HCT116 (cell line): ENCODE measurements at regions of chr4 and their contacts with region 1.

Region 1: DNA sequence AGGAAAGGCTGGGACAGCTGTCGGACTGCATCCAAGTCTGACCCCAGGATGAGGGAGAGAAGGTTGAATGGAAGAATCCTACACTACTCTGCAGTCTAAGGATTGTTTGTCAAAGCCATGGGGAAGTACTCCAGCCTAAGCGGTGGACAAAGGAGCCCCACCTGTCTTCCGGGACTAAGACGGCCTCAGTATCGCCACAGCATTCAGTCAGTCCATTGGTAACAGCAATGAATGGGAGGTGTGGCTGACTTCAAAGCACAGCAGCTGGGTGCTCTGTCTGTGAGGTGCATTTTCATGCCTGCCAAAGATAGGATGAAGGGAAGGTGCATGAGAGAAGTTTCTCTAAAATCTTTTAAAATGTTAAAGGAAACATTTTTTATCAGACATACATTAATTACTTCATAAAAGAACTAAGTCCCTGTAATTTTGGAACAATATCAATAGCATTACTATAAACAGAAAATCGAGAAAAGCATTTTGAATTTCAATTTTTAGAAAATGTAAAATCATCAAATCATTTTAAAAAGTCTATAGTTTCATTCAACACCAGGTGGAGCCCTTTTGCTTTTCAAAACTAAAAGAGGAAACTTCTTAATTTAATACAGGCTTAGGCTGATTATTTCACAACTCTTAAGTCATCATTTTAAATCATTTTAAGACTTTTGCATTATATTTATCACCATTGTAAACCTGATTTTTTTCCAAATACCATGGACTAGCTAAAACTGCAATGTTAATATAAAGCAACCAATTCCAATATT is 27.6 kb upstream of the INTU start:
- DNase-seq: peak; percentile 33
- ATAC-seq: peak; percentile 94
- H3K4me3 ChIP-seq: peak overlapping the region; percentile 4 to 19; a peak in 2 of 4 replicates
- H3K27ac ChIP-seq: no peak overlapping the region
- H3K4me1 ChIP-seq: peaks cover 6 to 7% of the 10 kb centered on the region in 2 experiments; a peak in 3 of 4 replicates
- H3K27me3 ChIP-seq: no peaks in the 10 kb centered on the region
- CTCF ChIP-seq: peak in 2 of 3 experiments; percentile 62 to 80; a peak in 3 of 6 replicates
- POLR2A ChIP-seq: no peak
- RAD21 ChIP-seq: peak; percentile 82

Region 2: DNA sequence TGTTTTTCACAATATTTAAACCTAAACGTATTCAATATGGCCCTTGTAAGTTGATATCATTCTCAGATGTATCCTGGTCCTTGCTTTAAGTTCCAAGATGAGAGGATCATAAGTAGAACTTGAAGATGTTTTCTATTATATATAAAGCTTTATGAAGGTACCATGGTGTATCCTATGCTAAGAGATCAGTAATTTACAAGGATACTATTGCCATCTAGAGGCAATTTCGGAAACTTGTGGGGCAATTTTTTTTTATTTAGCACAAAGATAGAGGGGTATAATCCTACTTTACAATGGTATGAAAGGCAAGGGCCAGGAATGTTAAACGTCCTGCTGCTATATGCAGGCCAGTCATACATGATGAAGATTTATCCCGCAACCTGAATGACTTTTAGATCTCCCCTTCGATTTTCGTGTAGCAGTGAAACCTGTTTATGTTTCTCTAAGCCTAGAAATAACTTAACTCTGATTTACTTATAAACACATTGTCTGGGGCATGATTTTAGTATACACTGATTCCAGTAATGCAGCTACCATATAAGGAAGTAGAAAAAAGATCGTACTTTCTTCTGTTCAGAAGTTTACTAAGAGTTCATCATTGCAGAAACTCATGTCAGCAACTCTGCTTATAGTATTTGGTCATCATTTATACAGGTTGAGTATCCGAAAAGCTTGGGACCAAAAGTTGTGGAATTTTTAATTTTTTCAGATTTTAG is 127.6 kb after region 1 on chr4:
- CTCF ChIA-PET with region 1: interaction called, 96 read pairs
- POLR2A ChIA-PET with region 1: no interaction called
- RAD21 ChIA-PET with region 1: interaction called, 6 to 7 read pairs
- intact Hi-C with region 1: loop called (anchors 1 kb)
- DNase-seq: peak; percentile 41
- ATAC-seq: peak; percentile 96
- H3K4me3 ChIP-seq: no peak overlapping the region
- H3K27ac ChIP-seq: no peak overlapping the region
- H3K4me1 ChIP-seq: no peaks in the 10 kb centered on the region
- H3K27me3 ChIP-seq: no peaks in the 10 kb centered on the region
- CTCF ChIP-seq: peak; percentile 40 to 84 (median 76); a peak in 5 of 6 replicates
- POLR2A ChIP-seq: no peak
- RAD21 ChIP-seq: peak; percentile 86

Region 3: DNA sequence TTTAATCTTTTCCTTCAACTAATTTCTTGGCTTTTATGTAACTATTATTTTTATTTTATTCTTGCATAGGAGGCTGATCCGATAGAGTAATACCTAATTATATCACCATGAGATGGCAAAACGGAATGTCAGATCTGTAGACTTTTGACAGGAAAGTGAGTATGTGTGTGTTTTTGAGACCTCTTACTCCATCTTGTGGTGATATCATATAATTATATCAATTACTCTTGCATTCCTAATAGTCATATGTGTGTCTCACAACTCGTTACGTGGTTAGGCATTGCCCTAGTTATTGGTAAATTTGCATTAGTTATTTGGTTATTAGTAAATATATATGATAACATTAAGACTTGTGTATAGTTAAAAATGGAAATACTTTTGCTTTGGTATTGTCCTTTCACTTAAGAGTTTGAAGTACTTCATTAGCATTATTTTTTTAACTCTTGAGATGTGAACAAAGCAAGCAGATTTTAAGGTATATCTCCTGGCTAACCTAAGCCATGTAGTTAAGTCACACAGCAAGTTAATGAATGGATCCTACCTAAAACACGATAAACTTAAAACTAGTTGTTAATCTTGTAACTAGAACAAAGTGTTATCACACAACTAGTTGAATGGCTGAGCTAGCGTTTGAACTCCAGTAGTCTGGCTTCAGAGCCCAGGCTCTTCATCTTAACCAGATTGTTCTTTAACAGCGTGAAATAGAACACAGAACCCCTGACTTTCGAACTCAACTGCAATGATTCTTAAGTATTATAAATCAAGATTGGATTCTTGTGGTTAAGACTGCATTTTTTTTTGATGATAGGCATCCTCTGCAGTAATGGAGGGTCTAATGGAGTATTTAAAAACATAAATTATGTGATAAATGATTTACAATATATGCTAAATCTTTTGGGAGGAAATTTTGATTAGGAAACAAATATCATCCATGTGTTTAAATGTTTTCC is 615.4 kb after region 1 on chr4:
- CTCF ChIA-PET with region 1: no interaction called
- POLR2A ChIA-PET with region 1: no interaction called
- RAD21 ChIA-PET with region 1: no interaction called
- intact Hi-C with region 1: loop called (anchors 10 kb)
- DNase-seq: peak; percentile 36
- ATAC-seq: peak; percentile 89
- H3K4me3 ChIP-seq: no peak overlapping the region
- H3K27ac ChIP-seq: no peak overlapping the region
- H3K4me1 ChIP-seq: peaks cover 5 to 7% of the 10 kb centered on the region in 2 experiments; a peak in 3 of 4 replicates
- H3K27me3 ChIP-seq: no peaks in the 10 kb centered on the region
- CTCF ChIP-seq: peak; percentile 24 to 54 (median 52); a peak in 4 of 6 replicates
- POLR2A ChIP-seq: no peak
- RAD21 ChIP-seq: peak; percentile 70